ENCODE measurements at regions of chr20 and their contacts with region 1.

Region 1: GRCh38 chr20:25288266-25289181 is 40.6 kb downstream of the PYGB start:
- DNase-seq: no peak
- ATAC-seq: no peak
- H3K4me3 ChIP-seq: no peak overlapping the region
- H3K27ac ChIP-seq: no peak overlapping the region
- H3K4me1 ChIP-seq: no peaks in the 10 kb centered on the region
- CTCF ChIP-seq: no peak
- EP300 ChIP-seq: no peak
- POLR2A ChIP-seq: no peak
- RAD21 ChIP-seq: no peak

Region 2: DNA sequence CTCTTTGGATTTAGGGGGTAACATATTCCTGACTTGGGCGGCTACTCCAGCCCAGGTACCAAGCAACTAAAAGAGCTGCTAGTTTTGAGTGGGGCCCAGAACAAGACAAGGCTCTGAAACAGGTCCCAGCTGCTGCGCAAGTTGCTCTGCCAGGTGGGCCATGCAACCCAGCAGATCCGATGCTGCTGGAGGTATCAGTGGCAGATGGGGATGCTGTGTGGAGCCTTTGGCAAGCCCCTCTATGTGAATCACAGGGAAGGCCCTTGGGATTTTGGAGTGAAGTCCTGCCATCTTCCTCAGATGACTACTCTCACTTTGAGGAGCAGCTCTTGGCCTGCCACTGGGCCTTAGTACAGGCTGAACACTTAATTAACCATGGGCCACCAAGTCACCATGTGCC is 162.9 kb before region 1 on chr20:
- CTCF ChIA-PET with region 1: no interaction called
- POLR2A ChIA-PET with region 1: no interaction called
- DNase-seq: no peak
- ATAC-seq: no peak
- H3K4me3 ChIP-seq: no peak overlapping the region
- H3K27ac ChIP-seq: no peak overlapping the region
- H3K4me1 ChIP-seq: peaks cover 9% of the 10 kb centered on the region; the same call in 2 of the 3 replicates
- CTCF ChIP-seq: no peak
- EP300 ChIP-seq: no peak
- POLR2A ChIP-seq: no peak
- RAD21 ChIP-seq: no peak

Region 3: GRCh38 chr20:25148982-25149846 is 139.3 kb before region 1 on chr20:
- CTCF ChIA-PET with region 1: no interaction called
- POLR2A ChIA-PET with region 1: no interaction called
- DNase-seq: no peak
- ATAC-seq: no peak
- H3K4me3 ChIP-seq: no peak overlapping the region
- H3K27ac ChIP-seq: no peak overlapping the region
- H3K4me1 ChIP-seq: 0 out of 3 replicates have a peak, but pooled peaks cover 5% of the 10 kb centered on the region
- CTCF ChIP-seq: no peak
- EP300 ChIP-seq: no peak
- POLR2A ChIP-seq: no peak
- RAD21 ChIP-seq: no peak

Region 4: DNA sequence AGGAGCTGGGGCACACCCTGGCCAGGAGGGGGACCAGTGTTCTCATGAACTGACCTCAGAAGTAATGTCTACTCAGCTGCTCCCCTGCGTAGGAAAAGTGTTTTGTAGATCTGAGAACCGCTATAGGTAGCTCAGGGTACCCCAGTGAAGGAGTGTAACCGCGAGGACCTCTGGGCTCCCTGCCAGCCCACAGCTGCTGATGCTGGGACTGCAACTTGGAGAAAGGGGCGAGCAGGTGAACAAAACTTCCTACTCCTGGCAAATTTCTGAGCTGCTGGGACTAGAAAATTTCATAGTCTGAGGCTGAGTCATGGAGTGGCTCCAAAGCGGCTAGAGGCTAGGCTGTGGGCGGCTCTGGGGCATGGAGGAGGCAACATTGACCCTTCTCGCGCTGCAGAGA is 11.3 kb after region 1 on chr20:
- CTCF ChIA-PET with region 1: interaction called, 42 read pairs
- POLR2A ChIA-PET with region 1: no interaction called
- DNase-seq: no peak
- ATAC-seq: peak in 1 of 2 experiments; percentile 9; a peak in 2 of 6 replicates
- H3K4me3 ChIP-seq: no peak overlapping the region
- H3K27ac ChIP-seq: peak overlapping the region; percentile 53 to 72
- H3K4me1 ChIP-seq: peaks cover 61% of the 10 kb centered on the region
- CTCF ChIP-seq: no peak
- EP300 ChIP-seq: no peak
- POLR2A ChIP-seq: no peak
- RAD21 ChIP-seq: no peak

Measured in A549 (cell line).